Esophagus muscularis mucosa (tissue), 4 donors: ENCODE measurements at regions of chr22 and their contacts with region 1.

Region 1: DNA sequence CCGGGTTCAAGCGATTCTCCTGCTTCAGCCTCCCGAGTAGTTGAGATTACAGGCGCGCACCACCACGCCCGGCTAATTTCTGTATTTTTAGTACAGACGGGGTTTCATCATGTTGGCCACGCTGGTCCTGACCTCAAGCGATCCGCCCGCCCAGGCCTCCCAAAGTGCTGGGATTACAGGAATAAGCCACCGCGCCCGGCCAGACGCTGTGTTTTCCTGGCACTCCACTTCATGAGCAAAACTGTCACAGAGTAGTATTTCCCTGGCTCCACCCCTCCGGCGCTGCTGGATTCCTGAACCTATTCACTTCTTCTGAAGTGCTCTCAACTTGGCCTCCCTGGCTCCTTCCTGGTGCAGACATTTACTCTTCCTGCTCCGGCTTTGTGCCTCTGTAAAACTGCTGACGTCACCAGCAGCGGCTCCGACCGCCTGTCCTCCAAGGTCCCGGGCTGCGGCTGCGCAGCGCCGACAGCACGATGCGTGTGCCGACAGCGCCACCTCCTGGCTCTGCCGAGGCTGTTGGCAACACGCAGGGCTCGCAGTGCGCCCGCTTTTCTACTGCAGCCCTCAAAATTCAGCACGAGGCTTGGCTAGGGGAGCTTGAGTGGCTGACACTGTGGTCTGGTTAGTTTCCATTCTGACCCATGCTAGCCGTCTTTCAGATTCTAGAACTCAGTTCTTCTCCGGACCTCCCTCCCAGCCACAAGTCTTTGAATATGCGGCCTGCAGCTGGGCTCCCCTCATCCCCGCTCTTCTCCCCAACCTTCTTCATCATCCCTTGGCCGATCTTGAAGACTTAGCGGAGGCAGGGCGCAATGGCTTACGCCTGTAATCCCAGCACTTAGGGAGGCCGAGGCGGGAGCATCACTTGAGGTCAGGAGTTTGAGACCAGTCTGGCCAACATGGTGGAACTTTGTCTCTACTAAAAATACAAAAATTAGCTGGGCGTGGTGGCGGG is 36.6 kb downstream of the APOL3 start:
- DNase-seq: peak; percentile 98
- H3K4me3 ChIP-seq: peak overlapping the region; percentile 31 to 51 (median 42)
- H3K27ac ChIP-seq: peak overlapping the region; percentile 82 to 89 (median 89)
- H3K4me1 ChIP-seq: peaks cover 8 to 15% (median 12%) of the 10 kb centered on the region in 4 donors
- H3K27me3 ChIP-seq: no peaks in the 10 kb centered on the region
- CTCF ChIP-seq: peak; percentile 98 to 99 (median 98)
- EP300 ChIP-seq: peak; percentile 68
- POLR2A ChIP-seq: no peak

Region 2: GRCh38 chr22:35430897-35431322 is 693.0 kb before region 1 on chr22:
- intact Hi-C with region 1: loop called (anchors 10 kb)
- DNase-seq: peak; percentile 96
- H3K4me3 ChIP-seq: no peak overlapping the region
- H3K27ac ChIP-seq: peak overlapping the region; percentile 64 to 72 (median 69)
- H3K4me1 ChIP-seq: peaks cover 8 to 18% (median 15%) of the 10 kb centered on the region in 4 donors
- H3K27me3 ChIP-seq: no peaks in the 10 kb centered on the region
- CTCF ChIP-seq: peak; percentile 98 to 99 (median 99)
- EP300 ChIP-seq: no peak
- POLR2A ChIP-seq: no peak

Region 3: GRCh38 chr22:35930933-35931332 is 193.0 kb before region 1 on chr22:
- intact Hi-C with region 1: loop called (anchors 5 kb)
- DNase-seq: no peak
- H3K4me3 ChIP-seq: no peak overlapping the region
- H3K27ac ChIP-seq: no peak overlapping the region
- H3K4me1 ChIP-seq: peaks cover 7 to 32% (median 26%) of the 10 kb centered on the region in 4 donors
- H3K27me3 ChIP-seq: no peaks in the 10 kb centered on the region
- CTCF ChIP-seq: peak; percentile 72 to 82 (median 74)
- EP300 ChIP-seq: no peak
- POLR2A ChIP-seq: no peak

Region 4: GRCh38 chr22:36037102-36037758 is 86.7 kb before region 1 on chr22:
- intact Hi-C with region 1: no loop called
- DNase-seq: no peak
- H3K4me3 ChIP-seq: no peak overlapping the region
- H3K27ac ChIP-seq: no peak overlapping the region
- H3K4me1 ChIP-seq: peaks cover 0 to 8% (median 2%) of the 10 kb centered on the region in 4 donors
- H3K27me3 ChIP-seq: no peaks in the 10 kb centered on the region
- CTCF ChIP-seq: no peak
- EP300 ChIP-seq: no peak
- POLR2A ChIP-seq: no peak

Region 5: GRCh38 chr22:36065775-36066559 is 58.0 kb before region 1 on chr22:
- intact Hi-C with region 1: loop called (anchors 5 kb)
- DNase-seq: peak; percentile 95
- H3K4me3 ChIP-seq: peak overlapping the region; percentile 48 to 72 (median 58)
- H3K27ac ChIP-seq: peak overlapping the region; percentile 81 to 91 (median 88)
- H3K4me1 ChIP-seq: peaks cover 6 to 18% (median 14%) of the 10 kb centered on the region in 4 donors
- H3K27me3 ChIP-seq: no peaks in the 10 kb centered on the region
- CTCF ChIP-seq: peak in 2 of 3 experiments; percentile 99 to 100
- EP300 ChIP-seq: no peak
- POLR2A ChIP-seq: no peak